CD14-positive monocyte (primary cell): ENCODE measurements at regions of chr9 and their contacts with region 1.

Region 1: GRCh38 chr9:111631071-111631971 is at the start of gene DNAJC25:
- DNase-seq: peak; percentile 97 to 98 (median 98)
- H3K4me3 ChIP-seq: peak within 1 kb of the TSS; percentile 70 to 92 (median 76)
- H3K4me3 Mint-ChIP-seq: peak within 1 kb of the TSS; percentile 93 to 96
- H3K27ac ChIP-seq: peak within 1 kb of the TSS; percentile 74 to 90
- H3K27ac Mint-ChIP-seq: peak within 1 kb of the TSS; percentile 89 to 95 (median 93)
- H3K4me1 ChIP-seq: peaks cover 21 to 23% of the 10 kb centered on the region in 2 donors
- H3K4me1 Mint-ChIP-seq: peaks cover 42% of the 10 kb centered on the region
- H3K27me3 ChIP-seq: no peaks in the 10 kb centered on the region
- H3K27me3 Mint-ChIP-seq: peaks cover 0 to 2% (median under 1%) of the 10 kb centered on the region in 3 donors
- CTCF ChIP-seq: no peak
- polyA plus RNA-seq, gene DNAJC25: 1.1 to 6.0 (median 1.6) TPM

Region 2: DNA sequence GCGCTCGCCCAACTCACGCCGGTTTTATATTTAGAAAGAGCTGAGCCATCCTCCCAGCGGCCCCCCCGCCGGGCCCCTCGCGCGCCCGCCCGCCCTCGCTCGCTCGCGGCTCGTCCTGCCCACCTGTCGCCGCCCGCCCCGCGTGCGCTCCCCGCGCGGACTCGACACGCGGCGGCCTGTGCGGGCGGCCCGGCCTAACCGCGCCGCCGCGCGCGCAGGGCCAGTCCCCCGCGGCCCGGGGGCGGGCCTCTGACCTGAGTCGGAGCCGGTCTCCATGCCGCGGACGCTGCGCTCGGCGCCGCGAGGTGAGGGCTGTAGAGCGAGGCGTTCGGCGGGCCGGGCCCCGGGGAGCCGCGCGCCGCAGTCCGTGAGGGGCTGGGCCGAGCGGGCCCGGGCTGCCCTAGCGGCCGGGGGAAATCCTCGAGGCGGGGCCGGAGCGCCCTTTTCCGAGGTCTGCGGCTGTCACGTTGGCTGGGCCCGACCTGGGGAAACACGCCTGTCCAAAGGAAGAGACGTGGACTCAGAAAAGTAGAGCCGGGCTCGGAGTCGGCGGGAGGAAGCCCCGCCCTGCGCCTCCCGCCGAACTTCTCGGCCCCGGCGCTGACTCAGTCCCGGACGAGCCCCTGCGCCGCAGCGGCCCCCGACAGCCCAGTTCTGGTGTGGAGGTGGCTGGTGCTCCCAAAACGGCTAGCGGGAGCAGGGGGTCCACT is 147.3 kb before region 1 on chr9 and contains the start of gene ECPAS:
- intact Hi-C with region 1: loop called in 1 of 2 experiments (anchors 5 kb)
- DNase-seq: peak; percentile 67 to 81 (median 70)
- H3K4me3 ChIP-seq: peak within 1 kb of the TSS; percentile 86 to 92 (median 90)
- H3K4me3 Mint-ChIP-seq: peak within 1 kb of the TSS; percentile 83 to 92
- H3K27ac ChIP-seq: peak within 1 kb of the TSS; percentile 86 to 88
- H3K27ac Mint-ChIP-seq: peak within 1 kb of the TSS; percentile 82 to 94 (median 91)
- H3K4me1 ChIP-seq: peaks cover 22 to 26% of the 10 kb centered on the region in 2 donors
- H3K4me1 Mint-ChIP-seq: peaks cover 32% of the 10 kb centered on the region
- H3K27me3 ChIP-seq: no peaks in the 10 kb centered on the region
- H3K27me3 Mint-ChIP-seq: peaks cover 2 to 3% (median 3%) of the 10 kb centered on the region in 3 donors
- CTCF ChIP-seq: no peak
- polyA plus RNA-seq, gene ECPAS: 7.4 to 27.6 (median 15.9) TPM